ENCODE measurements at regions of chr14 and their contacts with region 1.

Region 1: GRCh38 chr14:104768437-104769323 is 15.7 kb downstream of the SIVA1 start:
- DNase-seq: peak; percentile 75
- H3K4me3 ChIP-seq: no peak overlapping the region
- H3K27ac ChIP-seq: no peak overlapping the region
- H3K4me1 ChIP-seq: peaks cover 8% of the 10 kb centered on the region
- H3K27me3 ChIP-seq: no peaks in the 10 kb centered on the region
- CTCF ChIP-seq: peak; percentile 73 to 96
- POLR2A ChIP-seq: no peak

Region 2: DNA sequence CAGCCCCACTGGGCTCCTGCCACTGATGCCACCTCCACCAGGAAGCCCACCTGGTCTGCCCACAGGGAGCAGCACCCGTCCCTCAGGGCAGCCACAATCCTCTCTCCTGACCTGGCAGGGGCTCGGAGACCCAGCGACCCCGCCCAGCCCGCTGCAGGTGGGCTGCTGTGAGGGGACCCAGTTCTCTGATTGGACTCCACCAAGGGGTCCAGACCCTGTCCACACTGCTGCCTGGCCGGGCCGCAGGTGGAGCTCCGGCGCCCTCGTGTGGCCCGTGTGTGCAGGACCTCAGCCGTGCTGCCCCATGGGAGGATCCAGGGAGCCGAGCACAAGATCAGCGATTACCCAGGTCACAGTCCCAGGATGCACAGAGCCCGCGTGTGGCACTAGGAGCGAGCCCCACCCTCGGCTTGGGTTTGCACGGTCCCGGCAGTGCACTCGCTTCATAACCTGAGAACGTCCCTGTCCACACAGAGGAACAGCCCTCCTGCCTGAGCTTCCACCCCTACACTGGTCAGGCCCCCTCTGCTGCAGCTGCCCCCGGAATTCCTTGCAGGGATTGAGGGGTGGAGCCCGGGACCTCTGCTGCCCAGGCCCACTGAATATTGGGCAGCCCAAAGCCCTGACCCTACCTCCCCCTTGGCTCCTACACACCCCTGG is 128.7 kb before region 1 on chr14:
- CTCF ChIA-PET with region 1: no interaction called
- POLR2A ChIA-PET with region 1: no interaction called
- dilution Hi-C with region 1: no loop called
- intact Hi-C with region 1: no loop called
- DNase-seq: peak; percentile 55
- H3K4me3 ChIP-seq: no peak overlapping the region
- H3K27ac ChIP-seq: no peak overlapping the region
- H3K4me1 ChIP-seq: no peaks in the 10 kb centered on the region
- H3K27me3 ChIP-seq: peaks cover 0 to under 1% of the 10 kb centered on the region in 2 experiments
- CTCF ChIP-seq: peak; percentile 94 to 99
- POLR2A ChIP-seq: no peak

Region 3: DNA sequence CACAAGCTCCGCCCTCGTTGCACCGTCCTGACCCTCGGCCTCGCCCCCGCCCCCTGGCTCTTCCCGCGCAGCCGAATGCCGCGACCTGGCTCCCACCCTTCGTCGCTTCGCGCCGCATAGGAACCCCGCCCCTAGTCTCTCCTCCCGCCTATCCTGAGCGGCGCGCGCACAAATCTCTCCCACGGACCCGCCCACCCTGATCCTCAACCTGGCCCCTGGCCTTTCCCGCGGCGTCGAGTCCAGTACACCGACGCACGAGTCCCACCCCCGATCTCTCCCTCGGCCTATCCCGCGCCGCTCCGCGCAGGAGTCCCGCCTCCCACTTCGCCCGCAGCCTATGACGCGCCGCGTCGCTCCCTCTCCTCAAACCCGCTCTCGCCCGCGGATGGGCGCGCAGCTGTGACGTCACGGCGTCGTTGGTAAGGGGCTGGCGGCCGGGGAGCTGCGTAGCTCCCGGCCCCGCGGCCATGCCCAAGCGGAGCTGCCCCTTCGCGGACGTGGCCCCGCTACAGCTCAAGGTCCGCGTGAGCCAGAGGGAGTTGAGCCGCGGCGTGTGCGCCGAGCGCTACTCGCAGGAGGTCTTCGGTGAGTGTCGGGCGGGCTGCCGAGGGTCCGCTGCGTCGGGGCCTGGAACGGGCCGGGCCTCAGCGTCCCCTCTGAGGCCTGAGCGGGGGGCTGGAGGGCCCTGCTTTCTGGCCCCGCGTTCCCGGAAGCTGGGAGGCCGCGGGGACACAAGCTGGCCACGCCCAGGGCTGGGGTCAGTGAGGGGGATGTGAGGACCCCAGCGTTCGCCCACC is 15.7 kb before region 1 on chr14 and contains the start of gene SIVA1:
- CTCF ChIA-PET with region 1: interaction called, 16 read pairs
- POLR2A ChIA-PET with region 1: interaction called, 3 read pairs
- dilution Hi-C with region 1: no loop called
- intact Hi-C with region 1: no loop called
- DNase-seq: peak; percentile 100
- H3K4me3 ChIP-seq: peak within 1 kb of the TSS; percentile 22 to 96 (median 56)
- H3K27ac ChIP-seq: peak within 1 kb of the TSS; percentile 39
- H3K4me1 ChIP-seq: peaks cover 8% of the 10 kb centered on the region
- H3K27me3 ChIP-seq: no peaks in the 10 kb centered on the region
- CTCF ChIP-seq: no peak
- POLR2A ChIP-seq: peak; percentile 79
- total RNA-seq, gene SIVA1: 92.7 and 101 TPM in 2 replicates

Region 4: DNA sequence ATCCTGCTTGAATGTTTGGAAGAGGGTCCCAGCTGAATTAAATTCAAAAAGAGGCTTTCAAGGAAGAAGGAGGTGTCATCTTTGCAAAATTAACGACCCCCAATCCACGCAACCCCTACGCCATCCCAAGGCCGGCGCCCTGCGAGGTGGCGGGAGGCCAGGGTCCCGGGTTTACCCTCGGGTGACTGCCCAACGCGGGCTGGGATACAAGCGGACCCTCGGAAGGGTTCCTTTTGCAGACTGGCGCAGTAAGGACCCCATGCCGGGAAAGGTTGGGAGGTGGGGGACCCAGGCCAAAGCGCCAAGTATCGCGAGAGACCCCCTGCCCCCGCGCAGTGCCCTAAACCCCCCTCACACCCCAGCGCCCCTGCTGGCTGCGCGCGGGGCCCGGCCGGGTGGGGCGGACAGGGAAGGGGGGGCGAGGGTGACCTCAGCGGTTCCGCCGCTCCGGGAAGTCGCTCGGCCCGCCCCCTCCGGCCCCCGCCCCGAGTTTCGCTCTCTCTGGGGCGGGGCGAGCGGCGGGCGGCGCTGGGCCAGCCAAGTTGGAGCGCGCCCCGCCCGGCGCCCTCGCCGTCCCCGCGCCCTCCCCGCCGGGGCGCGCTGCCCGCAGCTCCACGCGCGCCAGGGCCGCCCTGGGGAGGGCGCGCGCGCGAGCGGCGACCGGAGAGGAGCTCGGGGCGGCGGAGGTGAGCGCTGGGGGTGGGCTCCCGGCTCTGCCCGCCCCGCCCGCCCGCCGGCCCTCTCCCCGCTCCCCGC is 31.5 kb after region 1 on chr14:
- CTCF ChIA-PET with region 1: interaction called, 7 read pairs
- POLR2A ChIA-PET with region 1: no interaction called
- dilution Hi-C with region 1: no loop called
- intact Hi-C with region 1: loop called (anchors 2 kb)
- DNase-seq: peak; percentile 62
- H3K4me3 ChIP-seq: peak overlapping the region in 1 of 3 experiments; percentile 71
- H3K27ac ChIP-seq: no peak overlapping the region
- H3K4me1 ChIP-seq: peaks cover 7% of the 10 kb centered on the region
- H3K27me3 ChIP-seq: no peaks in the 10 kb centered on the region
- CTCF ChIP-seq: peak; percentile 10 to 51
- POLR2A ChIP-seq: no peak

Region 5: DNA sequence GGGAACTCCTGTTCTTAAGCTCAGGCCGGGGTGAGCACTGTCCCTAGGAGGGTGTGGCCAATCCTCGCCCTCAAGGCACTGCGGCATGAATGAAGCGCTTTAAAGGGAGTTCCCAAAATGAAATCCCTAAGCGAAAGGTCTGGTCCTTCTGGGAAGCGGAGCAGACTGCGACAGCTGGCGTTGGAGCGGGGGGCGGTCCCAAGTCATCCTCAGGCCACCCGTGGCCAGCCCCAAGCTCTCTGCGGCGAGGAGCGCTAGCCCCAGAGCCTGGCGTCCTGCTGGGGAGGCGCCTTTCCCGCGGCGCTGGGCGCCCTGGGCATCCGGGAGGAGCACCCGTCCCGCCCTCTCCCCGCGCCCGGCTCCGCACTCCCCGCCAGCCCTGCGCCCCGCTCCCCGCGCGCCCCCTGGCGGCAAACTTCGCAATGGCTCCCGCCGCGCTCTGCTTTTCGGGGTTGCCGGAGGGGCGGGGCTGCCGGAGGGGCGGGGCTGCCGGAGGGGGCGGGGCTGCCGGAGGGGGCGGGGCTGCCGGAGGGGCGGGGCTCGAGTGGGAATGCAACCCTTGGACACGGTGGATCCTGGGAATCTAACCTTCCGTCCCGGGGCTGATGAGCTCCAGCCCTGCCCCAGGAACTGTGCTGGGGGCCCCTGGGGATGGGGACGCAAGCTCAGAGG is 57.6 kb after region 1 on chr14:
- CTCF ChIA-PET with region 1: interaction called, 117 read pairs
- POLR2A ChIA-PET with region 1: no interaction called
- dilution Hi-C with region 1: no loop called
- intact Hi-C with region 1: loop called (anchors 1 kb)
- DNase-seq: peak; percentile 69
- H3K4me3 ChIP-seq: peak overlapping the region; percentile 53 to 82 (median 64)
- H3K27ac ChIP-seq: no peak overlapping the region
- H3K4me1 ChIP-seq: peaks cover 10% of the 10 kb centered on the region
- H3K27me3 ChIP-seq: no peaks in the 10 kb centered on the region
- CTCF ChIP-seq: peak; percentile 40 to 59
- POLR2A ChIP-seq: no peak

Region 6: GRCh38 chr14:104970231-104971101 is 201.8 kb after region 1 on chr14:
- CTCF ChIA-PET with region 1: interaction called, 16 read pairs
- POLR2A ChIA-PET with region 1: no interaction called
- dilution Hi-C with region 1: no loop called
- intact Hi-C with region 1: loop called (anchors 10 kb)
- DNase-seq: peak; percentile 87
- H3K4me3 ChIP-seq: peak overlapping the region; percentile 24 to 59 (median 41)
- H3K27ac ChIP-seq: peak overlapping the region; percentile 89
- H3K4me1 ChIP-seq: peaks cover 79% of the 10 kb centered on the region
- H3K27me3 ChIP-seq: no peaks in the 10 kb centered on the region
- CTCF ChIP-seq: no peak
- POLR2A ChIP-seq: peak; percentile 74

Measured in endothelial cell of umbilical vein (primary cell).